ENCODE measurements at regions of chr9 and their contacts with region 1.

Region 1: DNA sequence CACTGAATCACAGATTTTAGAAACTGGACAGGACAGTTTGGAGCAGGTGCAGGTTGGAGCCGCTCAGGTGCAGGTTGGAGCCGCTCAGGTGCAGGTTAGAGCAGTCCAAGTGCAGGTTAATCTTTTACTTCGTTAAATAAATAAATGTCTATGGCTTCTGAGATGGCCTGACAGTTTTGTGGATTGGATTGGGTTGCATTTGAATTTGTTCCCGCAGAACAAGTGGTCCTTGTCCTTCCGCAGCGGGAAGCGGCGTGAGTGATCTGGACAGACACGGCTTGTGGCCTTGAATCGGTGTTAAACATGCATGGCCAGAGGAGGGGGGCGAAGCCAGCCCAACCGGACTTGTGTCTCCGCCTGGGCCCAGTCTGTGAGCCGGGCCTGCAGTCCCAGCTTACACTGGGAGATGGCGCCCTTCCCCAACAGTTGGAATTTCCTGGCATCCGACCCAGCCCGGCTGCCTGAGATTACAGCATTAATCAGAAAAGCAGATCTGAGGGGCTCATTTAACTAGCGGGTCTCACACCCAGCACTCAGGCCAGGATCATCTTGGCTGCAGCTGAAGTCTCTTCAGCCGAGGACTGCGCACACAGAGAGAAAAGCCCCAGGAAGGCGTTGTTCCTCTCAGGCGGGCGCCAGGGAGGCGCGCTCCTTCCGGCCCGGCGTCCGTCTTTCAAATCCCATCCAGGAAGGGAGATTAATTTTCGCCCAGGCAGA is 1.5 kb upstream of the OLFM1 start:
- DNase-seq: peak; percentile 92
- H3K4me3 ChIP-seq: peak overlapping the region; percentile 17 to 48; a peak in 3 of 4 replicates
- H3K27ac ChIP-seq: no peak overlapping the region
- H3K4me1 ChIP-seq: peaks cover 0 to 10% of the 10 kb centered on the region in 2 experiments; a peak in 1 of 4 replicates
- H3K27me3 ChIP-seq: no peaks in the 10 kb centered on the region
- CTCF ChIP-seq: peak; percentile 91
- EP300 ChIP-seq: no peak
- RAD21 ChIP-seq: peak; percentile 98

Region 2: DNA sequence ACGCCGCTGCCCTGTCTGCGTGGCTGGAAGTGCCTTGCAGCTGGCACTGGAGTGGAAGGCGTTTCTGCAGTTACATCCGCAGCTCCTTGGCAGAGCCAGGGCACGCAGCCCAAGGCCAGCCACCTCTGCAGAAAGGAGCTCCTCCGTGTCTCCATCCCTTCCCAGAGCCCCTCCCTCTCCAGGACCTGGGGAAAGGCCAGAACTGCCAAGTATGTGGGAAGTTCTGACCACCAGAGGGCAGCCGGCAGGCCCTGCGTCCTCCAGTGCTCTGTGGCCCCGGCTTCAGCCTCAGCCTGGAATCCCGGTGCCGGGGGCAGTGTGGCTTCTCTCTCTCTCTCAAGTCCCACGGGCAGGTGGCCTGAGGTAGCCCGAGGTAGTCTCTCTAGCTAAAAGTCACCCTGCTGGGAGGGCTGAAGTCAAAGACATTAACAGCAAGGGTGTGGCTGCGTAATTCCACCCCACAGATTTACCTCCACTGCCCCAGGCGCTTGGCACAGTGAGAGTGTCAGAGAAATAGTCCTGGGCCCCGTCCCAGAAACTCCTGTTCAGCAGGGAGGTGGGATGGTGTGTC is 307.1 kb before region 1 on chr9:
- CTCF ChIA-PET with region 1: interaction called, 31 read pairs
- POLR2A ChIA-PET with region 1: no interaction called
- DNase-seq: peak; percentile 84
- H3K4me3 ChIP-seq: no peak overlapping the region
- H3K27ac ChIP-seq: no peak overlapping the region
- H3K4me1 ChIP-seq: peaks cover 0 to 13% of the 10 kb centered on the region in 2 experiments; a peak in 1 of 4 replicates
- H3K27me3 ChIP-seq: no peaks in the 10 kb centered on the region
- CTCF ChIP-seq: peak; percentile 58
- EP300 ChIP-seq: no peak
- RAD21 ChIP-seq: peak; percentile 63

Region 3: DNA sequence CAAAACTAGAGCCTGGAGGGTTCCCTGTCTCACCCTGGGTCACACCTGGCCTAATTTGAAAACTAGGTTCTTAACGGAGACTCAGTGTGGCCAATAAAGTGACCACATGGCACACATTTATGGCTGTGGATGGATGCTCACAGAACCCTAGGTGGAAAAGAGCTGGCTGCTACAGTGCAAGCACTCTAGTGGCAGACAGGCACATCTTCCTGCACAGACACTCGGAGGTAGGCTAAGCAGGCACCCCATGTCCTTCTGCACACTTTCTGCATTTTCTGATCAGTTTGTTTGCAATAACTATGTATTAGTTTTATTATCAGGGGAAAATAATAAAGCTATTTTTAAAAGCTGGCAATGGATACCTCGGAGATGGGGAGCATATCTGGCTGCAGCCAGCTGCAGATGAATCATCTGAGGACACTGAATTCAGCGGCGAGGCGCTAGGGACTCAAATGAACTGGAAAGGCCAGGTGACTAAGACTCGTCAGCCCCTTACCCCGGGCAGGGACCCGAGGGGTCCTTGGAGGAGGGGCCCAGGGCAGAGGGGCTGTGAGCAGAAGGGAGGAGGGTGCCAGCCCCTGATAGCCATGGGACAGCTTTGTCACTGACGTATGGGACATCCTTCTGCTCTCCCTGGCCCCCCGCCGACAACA is 97.7 kb after region 1 on chr9:
- CTCF ChIA-PET with region 1: interaction called, 49 read pairs
- POLR2A ChIA-PET with region 1: no interaction called
- DNase-seq: no peak
- H3K4me3 ChIP-seq: no peak overlapping the region
- H3K27ac ChIP-seq: no peak overlapping the region; a peak in 1 of 4 replicates
- H3K4me1 ChIP-seq: peaks cover 0 to 34% of the 10 kb centered on the region in 2 experiments; a peak in 1 of 4 replicates
- H3K27me3 ChIP-seq: no peaks in the 10 kb centered on the region
- CTCF ChIP-seq: no peak
- EP300 ChIP-seq: no peak
- RAD21 ChIP-seq: no peak

Region 4: GRCh38 chr9:135229701-135230385 is 143.9 kb after region 1 on chr9:
- CTCF ChIA-PET with region 1: interaction called, 48 read pairs
- POLR2A ChIA-PET with region 1: no interaction called
- DNase-seq: no peak
- H3K4me3 ChIP-seq: no peak overlapping the region
- H3K27ac ChIP-seq: no peak overlapping the region
- H3K4me1 ChIP-seq: peaks cover 0 to 8% of the 10 kb centered on the region in 2 experiments; a peak in 1 of 4 replicates
- H3K27me3 ChIP-seq: no peaks in the 10 kb centered on the region
- CTCF ChIP-seq: no peak
- EP300 ChIP-seq: no peak
- RAD21 ChIP-seq: no peak

Region 5: DNA sequence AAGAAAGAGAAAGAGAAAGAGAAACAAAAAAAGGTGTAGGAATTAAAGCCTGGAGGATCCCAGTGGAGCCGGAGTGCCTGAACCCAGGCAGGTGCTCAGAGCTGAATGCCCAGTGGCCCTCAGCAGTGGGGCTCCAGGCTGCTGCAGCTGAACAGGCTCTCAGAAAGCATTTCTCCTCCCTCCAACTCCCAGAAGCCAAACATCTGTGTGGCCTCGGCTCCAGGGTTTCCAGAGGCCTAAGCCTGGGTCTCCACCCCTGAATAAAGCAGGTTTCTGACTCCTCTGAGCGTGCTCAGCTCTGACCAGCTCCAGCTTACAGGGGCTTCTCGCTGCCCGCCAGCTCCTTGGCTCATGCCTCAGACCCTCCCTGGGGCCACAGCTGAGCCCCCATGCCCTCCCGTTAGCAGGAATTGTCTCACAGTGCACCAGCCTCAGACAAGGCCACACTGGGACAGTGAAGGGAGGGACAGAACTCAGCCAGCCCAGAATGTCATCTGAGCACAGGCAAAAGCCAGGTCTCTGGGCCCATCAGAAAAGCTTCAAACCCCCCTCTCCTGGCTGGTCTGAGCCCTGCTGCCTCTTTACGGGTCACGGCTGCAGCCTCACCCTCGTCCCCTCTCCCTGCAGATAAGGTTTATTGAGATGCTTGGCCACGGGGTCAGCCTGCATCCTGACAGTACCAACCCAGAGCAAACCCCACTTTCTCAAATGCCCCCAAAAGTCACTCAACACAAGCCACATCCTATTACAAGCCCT is 279.2 kb after region 1 on chr9:
- CTCF ChIA-PET with region 1: interaction called, 14 read pairs
- POLR2A ChIA-PET with region 1: no interaction called
- DNase-seq: no peak
- H3K4me3 ChIP-seq: no peak overlapping the region
- H3K27ac ChIP-seq: no peak overlapping the region
- H3K4me1 ChIP-seq: peaks cover 0 to 9% of the 10 kb centered on the region in 2 experiments; a peak in 1 of 4 replicates
- H3K27me3 ChIP-seq: no peaks in the 10 kb centered on the region
- CTCF ChIP-seq: no peak
- EP300 ChIP-seq: no peak
- RAD21 ChIP-seq: no peak